MCF 10A (cell line): ENCODE measurements at regions of chr3 and their contacts with region 1.

Region 1: DNA sequence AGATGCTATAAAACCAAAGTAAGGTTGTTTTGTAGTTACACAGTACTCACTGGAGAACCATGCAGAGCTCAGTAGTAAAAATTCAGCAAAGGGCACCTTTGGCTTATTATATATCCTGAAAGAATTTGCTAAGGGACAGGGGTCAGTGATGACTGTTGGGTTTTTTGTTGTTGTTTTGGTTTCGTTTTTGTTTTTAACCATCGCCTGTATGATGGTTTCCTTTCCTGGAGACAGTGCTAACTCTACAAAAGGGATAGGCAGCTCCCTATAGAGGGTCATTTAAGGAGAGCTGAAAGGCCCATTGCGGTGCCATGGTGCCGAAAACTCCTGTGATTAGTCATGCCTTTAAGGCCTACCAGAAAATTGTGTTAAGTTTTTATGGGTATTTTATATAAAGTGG is 118.2 kb upstream of the GOLIM4 start:
- DNase-seq: no peak
- H3K4me3 Mint-ChIP-seq: no peak overlapping the region
- H3K27ac Mint-ChIP-seq: no peak overlapping the region
- H3K4me1 Mint-ChIP-seq: no peaks in the 10 kb centered on the region
- H3K27me3 Mint-ChIP-seq: peaks cover 40% of the 10 kb centered on the region
- CTCF ChIP-seq: no peak

Region 2: DNA sequence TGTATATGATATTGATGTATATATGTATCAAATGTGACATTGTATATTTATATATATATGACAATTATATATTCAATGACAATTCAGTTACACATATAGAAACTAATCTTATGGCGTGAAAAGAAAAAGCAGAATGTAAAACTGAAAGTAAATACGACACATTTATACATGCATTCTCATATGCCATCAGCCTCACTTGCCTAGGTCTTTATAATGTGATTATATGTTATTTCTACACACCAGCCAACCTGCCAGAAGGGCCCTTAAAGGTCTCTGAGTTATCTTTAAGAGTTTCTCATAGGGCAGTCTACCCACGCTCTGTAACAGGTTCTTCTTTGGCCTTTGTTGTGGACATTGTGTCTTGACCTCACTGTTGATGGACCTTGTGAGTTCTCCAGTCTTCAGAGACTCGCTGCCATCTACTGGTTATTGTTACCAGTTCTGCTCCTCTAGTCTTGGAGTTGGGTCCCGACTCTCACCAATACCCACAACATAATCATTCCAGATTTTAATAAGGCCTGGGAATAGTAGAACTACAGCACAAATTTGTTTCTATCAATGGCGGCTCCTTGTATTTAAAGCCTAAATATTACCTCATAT is 253.3 kb after region 1 on chr3:
- CTCF ChIA-PET with region 1: no interaction called
- POLR2A ChIA-PET with region 1: no interaction called
- intact Hi-C with region 1: loop called (anchors 2 kb)
- DNase-seq: peak; percentile 24
- H3K4me3 Mint-ChIP-seq: no peak overlapping the region
- H3K27ac Mint-ChIP-seq: no peak overlapping the region
- H3K4me1 Mint-ChIP-seq: no peaks in the 10 kb centered on the region
- H3K27me3 Mint-ChIP-seq: peaks cover 70% of the 10 kb centered on the region
- CTCF ChIP-seq: peak; percentile 9

Region 3: DNA sequence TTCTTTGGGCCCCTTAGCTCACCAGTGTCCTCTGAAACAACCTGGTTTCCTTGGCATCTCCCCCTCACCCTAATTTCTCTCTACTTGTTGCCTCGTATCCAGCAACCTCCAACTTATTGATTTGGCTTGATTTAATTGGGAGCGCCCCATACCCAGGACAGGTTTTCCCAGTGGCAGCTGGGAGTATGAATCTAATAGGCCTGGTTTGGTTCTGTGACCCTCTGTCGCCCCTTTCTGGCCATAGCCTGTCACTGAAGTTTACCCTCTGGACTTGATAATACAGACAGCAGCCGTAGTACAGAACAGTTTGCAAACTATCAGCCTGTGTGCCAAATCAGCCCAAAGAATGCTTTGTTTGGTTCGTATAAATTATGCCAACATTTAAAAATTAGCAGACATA is 406.9 kb after region 1 on chr3:
- CTCF ChIA-PET with region 1: interaction called, 3 read pairs
- POLR2A ChIA-PET with region 1: no interaction called
- intact Hi-C with region 1: loop called (anchors 2 kb)
- DNase-seq: peak; percentile 51
- H3K4me3 Mint-ChIP-seq: no peak overlapping the region
- H3K27ac Mint-ChIP-seq: no peak overlapping the region
- H3K4me1 Mint-ChIP-seq: no peaks in the 10 kb centered on the region
- H3K27me3 Mint-ChIP-seq: peaks cover 79% of the 10 kb centered on the region
- CTCF ChIP-seq: peak; percentile 38

Region 4: DNA sequence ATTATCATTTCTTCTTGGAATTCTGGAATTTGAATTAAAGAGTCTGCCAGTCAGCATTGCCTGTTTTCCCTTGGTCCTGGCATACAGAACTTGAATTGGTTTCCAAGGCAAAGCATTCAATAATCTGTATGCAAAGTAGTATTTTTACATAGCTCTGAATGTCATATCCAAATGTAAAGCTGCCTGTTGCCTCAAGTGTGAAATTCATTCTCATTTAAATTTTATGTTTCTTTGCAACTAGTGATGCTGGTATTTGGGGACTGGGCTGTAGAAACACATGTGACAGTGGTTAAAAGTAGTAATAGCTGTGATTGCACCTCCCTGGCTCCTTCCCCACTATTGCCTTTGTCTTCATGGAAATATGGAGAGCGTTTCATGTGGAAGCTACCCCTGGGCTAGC is 625.7 kb after region 1 on chr3:
- CTCF ChIA-PET with region 1: interaction called, 27 read pairs
- POLR2A ChIA-PET with region 1: no interaction called
- intact Hi-C with region 1: no loop called
- DNase-seq: no peak
- H3K4me3 Mint-ChIP-seq: no peak overlapping the region
- H3K27ac Mint-ChIP-seq: no peak overlapping the region
- H3K4me1 Mint-ChIP-seq: no peaks in the 10 kb centered on the region
- H3K27me3 Mint-ChIP-seq: peaks cover 63% of the 10 kb centered on the region
- CTCF ChIP-seq: no peak

Region 5: GRCh38 chr3:169744366-169745054 is 1530.6 kb after region 1 on chr3:
- CTCF ChIA-PET with region 1: interaction called, 3 read pairs
- POLR2A ChIA-PET with region 1: no interaction called
- intact Hi-C with region 1: loop called (anchors 2 kb)
- DNase-seq: no peak
- H3K4me3 Mint-ChIP-seq: no peak overlapping the region
- H3K27ac Mint-ChIP-seq: no peak overlapping the region
- H3K4me1 Mint-ChIP-seq: peaks cover 9% of the 10 kb centered on the region
- H3K27me3 Mint-ChIP-seq: no peaks in the 10 kb centered on the region
- CTCF ChIP-seq: peak; percentile 24